ENCODE measurements at regions of chr12 and their contacts with region 1.

Region 1: GRCh38 chr12:102169922-102170621 is 27.6 kb downstream of the PMCH start:
- DNase-seq: peak; percentile 44
- H3K4me3 Mint-ChIP-seq: no peak overlapping the region
- H3K27ac Mint-ChIP-seq: peak overlapping the region; percentile 13
- H3K4me1 Mint-ChIP-seq: no peaks in the 10 kb centered on the region
- H3K27me3 Mint-ChIP-seq: no peaks in the 10 kb centered on the region
- CTCF ChIP-seq: peak; percentile 66

Region 2: DNA sequence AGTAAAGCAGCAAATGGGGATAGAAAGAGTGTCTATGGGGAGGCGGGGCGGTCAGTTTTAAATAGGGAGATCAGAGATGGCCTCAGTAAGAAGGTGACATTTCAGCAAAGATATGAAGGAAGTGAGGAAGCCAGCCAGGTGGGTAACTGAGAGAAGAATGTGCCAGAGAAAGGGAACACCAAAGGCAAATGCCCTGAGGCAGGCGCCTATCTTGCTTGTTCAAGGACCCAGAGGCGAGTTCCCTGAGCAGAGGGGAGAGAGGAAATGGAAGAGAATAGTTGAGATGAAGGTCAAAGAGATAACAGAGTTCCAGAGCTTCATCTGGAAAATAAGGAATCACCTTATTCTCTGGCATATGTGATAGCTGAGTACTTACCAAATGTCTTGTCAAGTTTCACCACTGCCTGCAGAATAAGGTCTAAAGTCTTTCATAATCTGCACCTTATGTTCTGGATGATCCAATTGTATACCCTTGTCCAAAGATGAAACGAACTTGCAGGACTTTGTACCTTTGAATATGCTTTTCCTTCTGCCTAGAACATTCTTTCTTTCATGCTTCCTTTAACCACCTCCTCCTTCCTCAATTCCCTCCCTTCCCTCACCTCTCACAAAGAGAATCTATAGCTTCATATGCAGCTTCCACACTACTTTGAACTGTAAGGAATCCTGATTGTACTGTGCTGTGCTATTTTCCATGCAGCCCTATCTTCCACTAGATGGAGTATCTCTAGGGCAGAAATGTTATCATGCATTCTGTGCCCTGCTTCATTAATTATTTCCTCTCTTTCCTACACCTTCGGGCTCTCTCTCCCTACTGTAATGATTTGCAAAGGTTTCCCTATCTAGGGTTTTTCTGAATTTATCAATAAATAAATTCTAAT is 377.8 kb before region 1 on chr12:
- CTCF ChIA-PET with region 1: no interaction called
- POLR2A ChIA-PET with region 1: no interaction called
- intact Hi-C with region 1: no loop called
- DNase-seq: peak; percentile 4
- H3K4me3 Mint-ChIP-seq: no peak overlapping the region
- H3K27ac Mint-ChIP-seq: no peak overlapping the region
- H3K4me1 Mint-ChIP-seq: no peaks in the 10 kb centered on the region
- H3K27me3 Mint-ChIP-seq: no peaks in the 10 kb centered on the region
- CTCF ChIP-seq: no peak

Region 3: DNA sequence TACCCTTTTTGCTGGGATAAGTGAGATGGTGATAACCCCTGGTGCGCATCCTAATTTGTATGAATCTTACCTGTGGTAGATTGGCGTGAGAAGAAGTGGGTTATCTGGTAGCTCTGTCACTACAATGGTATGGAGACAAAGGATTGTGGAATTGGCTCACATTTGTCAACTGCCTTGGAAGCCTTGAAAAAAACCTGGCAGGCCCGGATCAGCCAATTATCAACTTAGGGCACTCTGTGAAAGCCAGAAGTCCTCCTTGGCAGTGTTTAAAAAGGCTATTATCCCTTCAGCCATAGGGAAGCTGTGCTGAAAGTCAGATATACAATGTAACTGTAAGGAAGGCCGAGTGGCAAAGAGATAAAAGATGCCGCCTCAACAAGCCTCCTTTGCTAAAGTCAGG is 164.8 kb before region 1 on chr12:
- CTCF ChIA-PET with region 1: no interaction called
- POLR2A ChIA-PET with region 1: no interaction called
- intact Hi-C with region 1: no loop called
- DNase-seq: no peak
- H3K4me3 Mint-ChIP-seq: no peak overlapping the region
- H3K27ac Mint-ChIP-seq: no peak overlapping the region
- H3K4me1 Mint-ChIP-seq: no peaks in the 10 kb centered on the region
- H3K27me3 Mint-ChIP-seq: no peaks in the 10 kb centered on the region
- CTCF ChIP-seq: no peak

Region 4: GRCh38 chr12:102249077-102249841 is 79.2 kb after region 1 on chr12:
- CTCF ChIA-PET with region 1: interaction called, 13 read pairs
- POLR2A ChIA-PET with region 1: no interaction called
- intact Hi-C with region 1: no loop called
- DNase-seq: peak; percentile 3
- H3K4me3 Mint-ChIP-seq: no peak overlapping the region
- H3K27ac Mint-ChIP-seq: no peak overlapping the region
- H3K4me1 Mint-ChIP-seq: no peaks in the 10 kb centered on the region
- H3K27me3 Mint-ChIP-seq: no peaks in the 10 kb centered on the region
- CTCF ChIP-seq: no peak

Region 5: GRCh38 chr12:102462795-102463465 is 292.9 kb after region 1 on chr12:
- CTCF ChIA-PET with region 1: interaction called, 10 read pairs
- POLR2A ChIA-PET with region 1: interaction called, 3 read pairs
- intact Hi-C with region 1: no loop called
- DNase-seq: peak; percentile 64
- H3K4me3 Mint-ChIP-seq: no peak overlapping the region
- H3K27ac Mint-ChIP-seq: peak overlapping the region; percentile 57
- H3K4me1 Mint-ChIP-seq: peaks cover 25% of the 10 kb centered on the region
- H3K27me3 Mint-ChIP-seq: no peaks in the 10 kb centered on the region
- CTCF ChIP-seq: no peak

Region 6: GRCh38 chr12:102479099-102479887 is 309.2 kb after region 1 on chr12:
- CTCF ChIA-PET with region 1: interaction called, 85 read pairs
- POLR2A ChIA-PET with region 1: interaction called, 3 read pairs
- intact Hi-C with region 1: loop called (anchors 1 kb)
- DNase-seq: no peak
- H3K4me3 Mint-ChIP-seq: no peak overlapping the region
- H3K27ac Mint-ChIP-seq: no peak overlapping the region
- H3K4me1 Mint-ChIP-seq: peaks cover 12% of the 10 kb centered on the region
- H3K27me3 Mint-ChIP-seq: no peaks in the 10 kb centered on the region
- CTCF ChIP-seq: no peak

Region 7: DNA sequence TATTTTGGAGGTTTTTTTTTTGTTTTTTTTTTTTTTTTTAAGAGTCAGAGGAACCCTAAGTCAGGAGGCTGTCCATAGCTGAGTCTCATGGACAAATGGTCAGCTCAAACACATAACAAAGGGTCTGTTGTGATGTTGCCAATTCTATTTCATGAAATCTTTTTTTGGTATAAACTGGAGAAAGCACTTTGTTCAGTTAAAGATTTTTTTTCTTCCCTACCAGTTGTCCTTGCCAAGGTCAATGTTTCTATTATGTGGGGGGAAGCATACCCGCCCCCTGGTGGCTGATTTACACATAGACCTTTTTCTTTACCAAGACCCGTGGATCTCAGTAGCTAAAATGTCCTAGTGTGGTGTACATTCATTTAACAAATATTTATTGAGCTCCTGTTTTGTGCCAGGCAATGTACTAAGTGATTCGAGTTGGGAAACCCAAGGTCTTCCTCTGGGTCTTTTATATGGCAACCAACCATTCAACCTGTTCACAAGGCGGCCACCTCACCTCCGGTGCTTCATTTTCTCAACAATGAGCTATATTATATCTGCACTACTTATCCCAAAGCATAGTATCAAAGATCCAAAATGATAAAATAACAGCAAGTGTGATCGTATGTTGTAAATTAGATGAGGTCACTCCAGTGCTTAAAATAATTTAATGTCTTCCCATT is 532.5 kb after region 1 on chr12:
- CTCF ChIA-PET with region 1: interaction called, 4 read pairs
- POLR2A ChIA-PET with region 1: no interaction called
- intact Hi-C with region 1: loop called (anchors 1 kb)
- DNase-seq: peak; percentile 51
- H3K4me3 Mint-ChIP-seq: no peak overlapping the region
- H3K27ac Mint-ChIP-seq: no peak overlapping the region
- H3K4me1 Mint-ChIP-seq: no peaks in the 10 kb centered on the region
- H3K27me3 Mint-ChIP-seq: peaks cover 54% of the 10 kb centered on the region
- CTCF ChIP-seq: peak; percentile 17

Region 8: GRCh38 chr12:102740141-102740955 is 570.3 kb after region 1 on chr12:
- CTCF ChIA-PET with region 1: interaction called, 44 read pairs
- POLR2A ChIA-PET with region 1: no interaction called
- intact Hi-C with region 1: loop called (anchors 1 kb)
- DNase-seq: peak; percentile 47
- H3K4me3 Mint-ChIP-seq: no peak overlapping the region
- H3K27ac Mint-ChIP-seq: no peak overlapping the region
- H3K4me1 Mint-ChIP-seq: no peaks in the 10 kb centered on the region
- H3K27me3 Mint-ChIP-seq: no peaks in the 10 kb centered on the region
- CTCF ChIP-seq: peak; percentile 30